Upper lobe of right lung (tissue), 1 donor: ENCODE measurements at regions of chr6 and their contacts with region 1.

Region 1: GRCh38 chr6:129055796-129056195 is 172.9 kb downstream of the LAMA2 start:
- DNase-seq: no peak
- ATAC-seq: no peak
- H3K4me3 ChIP-seq: no peak overlapping the region
- H3K27ac ChIP-seq: no peak overlapping the region
- H3K4me1 ChIP-seq: no peaks in the 10 kb centered on the region
- H3K27me3 ChIP-seq: no peaks in the 10 kb centered on the region
- CTCF ChIP-seq: no peak

Region 2: DNA sequence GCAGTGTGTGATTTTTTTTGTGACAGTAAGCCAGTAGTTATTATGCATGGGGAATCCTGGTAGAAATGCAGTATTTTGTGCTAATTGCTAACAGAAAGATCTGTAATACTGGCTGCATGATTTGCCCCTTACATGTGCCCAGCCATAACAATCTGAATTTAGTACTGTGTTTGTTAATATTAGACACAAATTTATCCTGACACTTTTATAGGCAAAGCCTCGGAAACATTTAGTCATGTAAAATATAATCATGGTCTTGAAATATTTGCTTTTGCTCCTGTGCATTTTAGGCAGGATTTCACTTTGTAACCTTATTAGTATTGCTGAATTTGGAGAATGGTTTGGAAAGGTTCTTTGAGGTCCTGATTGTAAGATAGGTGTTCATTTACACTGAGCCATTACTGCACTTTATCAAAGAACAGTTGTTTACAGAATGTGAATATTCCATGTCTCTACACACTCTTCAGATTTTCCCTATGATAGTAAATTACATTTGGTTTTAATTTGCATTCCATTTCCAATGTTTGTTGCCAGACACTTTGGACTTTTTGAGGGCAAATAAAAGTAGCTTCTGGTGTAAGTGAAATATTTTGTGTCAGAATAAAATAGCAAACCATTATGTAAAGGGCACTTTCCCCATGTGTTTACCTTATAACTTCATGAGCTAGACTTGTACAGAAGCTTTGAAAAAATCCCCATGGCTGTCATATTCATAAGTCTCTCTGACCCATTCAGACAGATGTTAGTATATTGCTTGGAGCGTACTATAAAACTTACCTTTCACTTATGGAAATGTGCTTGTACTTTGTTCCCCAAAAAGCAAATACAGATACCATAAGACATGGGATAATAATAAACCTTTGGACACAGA is 304.2 kb after region 1 on chr6:
- intact Hi-C with region 1: loop called (anchors 5 kb)
- DNase-seq: no peak
- ATAC-seq: no peak
- H3K4me3 ChIP-seq: no peak overlapping the region
- H3K27ac ChIP-seq: no peak overlapping the region
- H3K4me1 ChIP-seq: no peaks in the 10 kb centered on the region
- H3K27me3 ChIP-seq: no peaks in the 10 kb centered on the region
- CTCF ChIP-seq: no peak